ENCODE measurements at regions of chr2 and their contacts with region 1.

Region 1: DNA sequence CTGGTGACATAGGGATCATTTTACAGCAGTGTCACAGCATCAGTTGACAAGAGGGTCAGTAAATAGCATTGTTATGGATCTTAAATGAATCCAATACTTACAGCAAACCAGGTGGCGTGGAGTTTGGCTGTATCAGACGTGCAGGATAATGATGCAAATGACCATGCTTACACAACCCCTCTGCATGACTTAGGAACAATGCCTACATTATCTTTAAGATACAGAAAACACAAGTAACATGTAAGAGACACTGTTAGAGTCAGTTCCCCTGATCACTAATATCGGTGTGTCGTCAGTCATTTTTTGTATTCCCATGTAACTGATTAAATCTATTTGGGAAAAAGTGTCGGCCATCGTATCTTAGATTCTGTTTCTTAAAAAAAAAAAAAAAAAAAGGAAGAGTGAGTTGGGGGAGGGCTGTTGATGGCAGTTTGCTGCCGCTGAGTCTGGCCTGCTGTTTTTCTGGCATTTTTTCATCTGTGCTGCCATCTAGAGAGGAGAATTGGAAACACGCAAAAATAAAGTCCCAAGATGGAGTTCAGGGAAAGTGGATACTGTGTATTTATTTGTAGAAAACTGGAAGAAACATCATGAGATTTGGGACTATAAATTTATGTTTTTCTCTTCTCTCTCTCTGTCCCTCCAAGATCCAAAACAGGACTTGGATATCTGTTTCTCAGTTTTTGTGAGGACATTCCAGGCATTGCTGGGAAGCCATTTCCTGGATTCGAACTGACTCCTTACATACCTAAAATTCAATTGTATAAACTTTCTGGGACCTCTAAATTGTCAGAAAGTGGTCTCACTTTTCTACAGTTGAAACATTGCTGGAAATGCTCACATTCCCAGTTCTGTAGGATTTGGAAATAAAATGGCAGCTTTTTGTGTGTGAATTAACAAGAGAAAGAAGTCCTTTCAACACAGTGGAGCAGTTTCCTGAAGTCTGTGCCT is 60.3 kb upstream of the AGPS start:
- DNase-seq: peak; percentile 41 to 72 (median 65)
- H3K4me3 ChIP-seq: no peak overlapping the region
- H3K27ac ChIP-seq: peak overlapping the region in 4 of 5 donors; percentile 17 to 55 (median 32)
- H3K4me1 ChIP-seq: peaks cover 0 to 5% of the 10 kb centered on the region in 2 donors
- H3K27me3 ChIP-seq: no peaks in the 10 kb centered on the region
- CTCF ChIP-seq: peak; percentile 22 to 90 (median 70)
- POLR2A ChIP-seq: no peak

Region 2: GRCh38 chr2:177419274-177419673 is 87.0 kb after region 1 on chr2:
- intact Hi-C with region 1: loop called in 1 of 2 experiments (anchors 10 kb)
- DNase-seq: no peak
- H3K4me3 ChIP-seq: no peak overlapping the region
- H3K27ac ChIP-seq: no peak overlapping the region
- H3K4me1 ChIP-seq: peaks cover 9 to 35% of the 10 kb centered on the region in 2 donors
- H3K27me3 ChIP-seq: no peaks in the 10 kb centered on the region
- CTCF ChIP-seq: no peak
- POLR2A ChIP-seq: no peak

Region 3: DNA sequence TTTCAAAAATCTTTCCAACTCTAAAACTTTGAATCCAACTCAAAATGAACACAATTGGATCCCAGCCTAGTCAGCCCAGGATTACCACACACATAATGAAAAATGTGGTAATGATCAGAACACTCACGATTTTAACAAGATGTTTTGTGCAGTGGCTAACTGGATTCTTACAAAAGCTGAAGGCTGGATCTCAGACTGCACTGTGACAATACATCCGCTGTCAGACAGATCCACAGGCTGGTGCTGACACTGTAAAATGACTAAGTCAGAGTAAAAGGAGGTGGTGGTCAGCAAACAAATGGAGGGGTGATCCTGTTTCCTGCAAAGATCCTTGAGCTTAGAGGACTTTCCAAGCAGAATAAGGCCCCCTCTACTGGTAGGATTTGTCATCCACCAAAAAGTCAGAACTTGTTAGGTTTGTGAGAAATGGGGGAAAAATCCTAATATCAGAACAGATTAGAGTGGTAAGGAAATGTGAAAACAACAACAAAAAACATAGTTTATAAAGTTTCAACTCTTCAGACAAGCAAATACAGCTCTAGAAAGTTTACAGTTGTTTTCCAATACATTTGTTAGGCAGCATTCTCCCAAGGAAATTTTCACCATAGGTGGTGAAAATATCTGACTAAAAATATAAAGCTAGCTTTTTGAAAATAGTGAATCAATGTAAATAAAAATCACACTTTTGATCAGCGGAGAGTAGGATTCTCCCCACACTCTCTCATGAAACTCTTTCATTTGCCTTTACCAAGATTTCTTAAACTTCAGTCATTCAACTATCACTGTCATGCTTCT is 272.2 kb after region 1 on chr2:
- intact Hi-C with region 1: loop called in 1 of 2 experiments (anchors 5 kb)
- DNase-seq: peak in 3 of 7 donors; percentile 12 to 19 (median 16)
- H3K4me3 ChIP-seq: no peak overlapping the region
- H3K27ac ChIP-seq: peak overlapping the region in 2 of 5 donors; percentile 23 to 36
- H3K4me1 ChIP-seq: peaks cover 0 to 10% of the 10 kb centered on the region in 2 donors
- H3K27me3 ChIP-seq: no peaks in the 10 kb centered on the region
- CTCF ChIP-seq: peak; percentile 47 to 65 (median 59)
- POLR2A ChIP-seq: no peak

Region 4: DNA sequence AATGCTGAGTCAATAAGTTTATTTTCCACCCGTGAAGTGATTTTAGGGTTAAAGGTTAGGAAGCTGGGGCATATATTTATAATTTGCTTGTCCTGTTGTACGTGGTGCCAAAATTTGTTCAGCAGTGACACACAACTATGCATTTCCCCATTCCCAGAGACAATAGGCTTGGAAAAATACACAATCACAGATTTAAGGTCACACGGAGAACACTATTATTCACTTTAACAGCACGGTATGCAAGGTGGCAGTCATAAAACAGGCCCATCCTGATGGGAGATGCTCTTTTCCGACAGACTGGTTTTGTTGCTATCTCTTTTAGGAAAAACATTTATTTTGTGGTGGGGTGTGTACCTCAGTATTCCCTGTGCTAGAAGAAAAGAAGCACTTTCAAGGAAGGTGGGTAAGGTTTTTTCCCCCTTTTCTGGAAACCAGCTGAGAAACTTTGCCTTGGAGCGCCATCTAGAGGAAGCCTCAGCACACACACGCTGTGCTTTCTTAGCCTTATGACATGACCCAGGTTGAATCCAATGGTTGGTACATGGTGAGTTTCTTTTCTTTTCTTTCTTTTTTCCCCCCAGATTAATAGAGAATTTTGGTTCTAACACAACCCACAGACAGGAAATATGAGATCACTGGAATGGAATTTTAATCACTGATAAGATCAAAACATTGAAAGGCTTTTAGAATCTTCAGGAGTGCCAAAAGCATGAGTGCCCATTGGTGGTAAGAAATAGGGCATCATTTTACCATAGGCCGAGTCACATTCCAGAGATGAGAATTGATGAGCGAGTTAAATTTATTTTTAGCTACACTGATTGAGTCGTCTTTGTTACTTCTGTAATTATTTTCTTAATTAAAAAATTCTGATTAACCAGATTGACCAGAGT is 392.3 kb after region 1 on chr2:
- intact Hi-C with region 1: loop called (anchors 10 kb)
- DNase-seq: peak; percentile 39 to 75 (median 54)
- H3K4me3 ChIP-seq: no peak overlapping the region
- H3K27ac ChIP-seq: no peak overlapping the region
- H3K4me1 ChIP-seq: peaks cover 4 to 9% of the 10 kb centered on the region in 2 donors
- H3K27me3 ChIP-seq: no peaks in the 10 kb centered on the region
- CTCF ChIP-seq: peak; percentile 79 to 86 (median 82)
- POLR2A ChIP-seq: no peak

Region 5: GRCh38 chr2:177763532-177764265 is 431.4 kb after region 1 on chr2:
- intact Hi-C with region 1: loop called (anchors 10 kb)
- DNase-seq: peak; percentile 72 to 90 (median 81)
- H3K4me3 ChIP-seq: no peak overlapping the region
- H3K27ac ChIP-seq: no peak overlapping the region
- H3K4me1 ChIP-seq: no peaks in the 10 kb centered on the region
- H3K27me3 ChIP-seq: no peaks in the 10 kb centered on the region
- CTCF ChIP-seq: peak; percentile 64 to 89 (median 74)
- POLR2A ChIP-seq: no peak

Measured in adrenal gland (tissue), 19 donors.